SK-N-SH (cell line): ENCODE measurements at regions of chr5 and their contacts with region 1.

Region 1: DNA sequence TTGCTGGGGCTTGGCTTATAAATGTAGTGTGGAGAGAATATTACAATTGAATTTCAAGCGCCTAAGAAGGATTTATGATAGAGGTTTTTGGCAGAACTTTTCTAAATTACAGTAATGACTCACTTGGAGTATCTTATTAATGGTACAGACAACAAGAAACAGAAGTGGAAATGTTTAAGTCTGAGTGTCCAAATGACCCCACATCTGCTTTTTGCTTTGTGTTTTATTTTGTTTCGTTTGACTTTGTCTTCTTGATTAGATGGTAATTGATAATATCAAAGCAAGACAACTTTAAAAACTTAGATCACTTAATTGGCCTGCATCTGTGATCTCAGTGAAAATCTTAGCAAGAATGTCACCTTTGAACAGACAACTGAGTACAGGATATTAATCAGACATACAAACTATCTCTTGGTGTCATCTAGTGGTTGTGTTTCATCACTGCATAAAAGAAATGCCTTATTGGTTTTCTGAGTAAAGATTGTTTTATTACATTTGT is 577.4 kb downstream of the ISL1 start:
- DNase-seq: peak; percentile 12
- H3K4me3 ChIP-seq: no peak overlapping the region
- H3K27ac ChIP-seq: peak overlapping the region in 1 of 2 experiments; percentile 99; a peak in 2 of 4 replicates
- H3K4me1 ChIP-seq: peaks cover 0 to 14% of the 10 kb centered on the region in 2 experiments; a peak in 3 of 4 replicates
- H3K27me3 ChIP-seq: no peaks in the 10 kb centered on the region
- CTCF ChIP-seq: peak; percentile 86
- EP300 ChIP-seq: peak; percentile 36 to 90; a peak in 3 of 4 replicates
- RAD21 ChIP-seq: peak; percentile 93

Region 2: DNA sequence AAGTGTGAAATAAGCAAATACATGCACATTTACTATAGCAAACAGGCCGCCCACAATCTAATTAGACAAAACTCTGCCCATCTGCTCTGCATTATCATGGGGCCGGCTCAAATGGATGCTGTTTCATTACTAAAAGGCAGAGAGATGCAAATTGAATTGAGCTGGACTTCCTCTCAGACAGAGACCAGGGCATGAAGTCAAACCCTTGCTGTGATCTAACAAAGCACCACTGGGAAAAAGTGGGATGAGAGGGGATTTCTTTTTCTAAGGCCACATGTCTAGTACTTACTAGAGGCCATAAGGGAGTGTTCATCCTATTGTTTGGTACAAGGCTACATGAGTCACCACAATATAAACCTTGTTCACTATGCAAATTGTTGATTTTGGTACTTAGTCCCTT is 37.3 kb after region 1 on chr5:
- CTCF ChIA-PET with region 1: interaction called, 10 read pairs
- POLR2A ChIA-PET with region 1: interaction called, 3 read pairs
- DNase-seq: peak; percentile 79
- H3K4me3 ChIP-seq: no peak overlapping the region
- H3K27ac ChIP-seq: peak overlapping the region in 1 of 2 experiments; percentile 100; a peak in 3 of 4 replicates
- H3K4me1 ChIP-seq: peaks cover 0 to 41% of the 10 kb centered on the region in 2 experiments; a peak in 2 of 4 replicates
- H3K27me3 ChIP-seq: no peaks in the 10 kb centered on the region
- CTCF ChIP-seq: no peak
- EP300 ChIP-seq: peak in 1 of 2 experiments; percentile 99; a peak in 2 of 4 replicates
- RAD21 ChIP-seq: peak; percentile 39; the same call in 1 of the 2 replicates